A673 (cell line): ENCODE measurements at regions of chr12 and their contacts with region 1.

Region 1: GRCh38 chr12:32615441-32615840 is 63.7 kb upstream of the DNM1L start:
- DNase-seq: no peak
- H3K4me3 ChIP-seq: no peak overlapping the region
- H3K27ac ChIP-seq: no peak overlapping the region
- H3K4me1 ChIP-seq: peaks cover 9% of the 10 kb centered on the region
- H3K27me3 ChIP-seq: no peaks in the 10 kb centered on the region
- CTCF ChIP-seq: no peak

Region 2: DNA sequence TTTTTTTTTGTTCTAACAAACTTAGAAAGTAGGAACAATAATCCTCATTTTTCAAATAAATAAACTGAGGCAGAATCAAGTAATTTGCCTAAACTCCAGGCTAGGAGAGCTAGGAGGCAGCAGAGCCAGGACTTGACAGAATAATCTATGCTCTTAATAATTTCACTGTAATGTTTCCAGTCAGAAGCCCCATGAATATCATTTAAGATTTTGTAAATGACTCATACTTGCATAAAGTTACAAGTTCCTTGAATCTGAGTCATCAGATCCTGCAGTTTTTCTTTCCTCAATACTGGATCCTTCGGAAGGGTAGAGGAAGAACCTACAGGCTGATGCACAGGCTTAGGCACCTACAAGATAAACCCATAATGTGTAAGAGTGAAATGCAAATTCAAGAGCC is 1889.7 kb before region 1 on chr12:
- CTCF ChIA-PET with region 1: no interaction called
- POLR2A ChIA-PET with region 1: no interaction called
- intact Hi-C with region 1: no loop called
- DNase-seq: peak; percentile 69
- H3K4me3 ChIP-seq: no peak overlapping the region
- H3K27ac ChIP-seq: no peak overlapping the region
- H3K4me1 ChIP-seq: peaks cover 7% of the 10 kb centered on the region
- H3K27me3 ChIP-seq: no peaks in the 10 kb centered on the region
- CTCF ChIP-seq: no peak

Region 3: GRCh38 chr12:32467959-32468863 is 147.2 kb before region 1 on chr12:
- CTCF ChIA-PET with region 1: no interaction called
- POLR2A ChIA-PET with region 1: no interaction called
- intact Hi-C with region 1: no loop called
- DNase-seq: no peak
- H3K4me3 ChIP-seq: no peak overlapping the region
- H3K27ac ChIP-seq: no peak overlapping the region
- H3K4me1 ChIP-seq: no peaks in the 10 kb centered on the region
- H3K27me3 ChIP-seq: no peaks in the 10 kb centered on the region
- CTCF ChIP-seq: no peak

Region 4: GRCh38 chr12:32568241-32568640 is 47.2 kb before region 1 on chr12:
- CTCF ChIA-PET with region 1: no interaction called
- POLR2A ChIA-PET with region 1: no interaction called
- intact Hi-C with region 1: loop called (anchors 5 kb)
- DNase-seq: peak; percentile 60
- H3K4me3 ChIP-seq: no peak overlapping the region
- H3K27ac ChIP-seq: no peak overlapping the region
- H3K4me1 ChIP-seq: peaks cover 16% of the 10 kb centered on the region
- H3K27me3 ChIP-seq: no peaks in the 10 kb centered on the region
- CTCF ChIP-seq: no peak

Region 5: DNA sequence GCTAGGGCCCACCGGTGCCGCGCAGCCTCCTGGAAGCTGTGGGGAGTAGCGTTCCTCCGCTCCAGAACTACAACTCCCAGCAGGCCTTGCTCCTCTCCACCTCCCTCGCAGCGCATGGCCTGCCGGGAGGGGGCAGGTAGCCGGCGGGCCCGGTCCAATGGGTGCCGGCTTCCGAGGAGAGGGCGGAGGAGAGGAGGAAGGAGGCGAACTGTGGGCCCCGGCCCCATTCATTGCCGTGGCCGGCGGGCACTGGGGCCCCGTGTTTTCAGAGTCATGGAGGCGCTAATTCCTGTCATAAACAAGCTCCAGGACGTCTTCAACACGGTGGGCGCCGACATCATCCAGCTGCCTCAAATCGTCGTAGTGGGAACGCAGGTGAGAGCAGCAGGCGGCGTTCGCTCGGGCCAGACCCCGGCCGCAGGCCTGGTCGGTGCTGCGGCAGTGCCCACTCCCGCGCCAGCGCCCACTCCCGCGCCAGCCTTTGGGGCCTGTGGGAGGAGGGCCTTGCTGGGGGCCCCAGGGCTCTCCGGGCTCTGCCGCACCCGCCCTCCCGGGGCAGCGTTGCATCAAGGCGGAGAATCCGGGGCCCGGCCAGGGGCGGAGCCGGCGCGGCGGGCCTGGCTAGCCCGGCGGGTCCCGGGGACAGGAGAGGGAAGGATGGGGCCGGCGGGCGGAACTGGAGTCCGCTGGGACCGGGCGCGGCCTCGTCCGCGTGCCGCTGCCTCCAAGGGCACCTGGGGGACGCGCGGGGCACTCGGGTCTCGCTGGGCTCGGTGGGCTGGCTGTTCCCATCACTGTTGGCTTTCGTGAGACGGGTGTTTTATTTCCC is 63.9 kb after region 1 on chr12 and contains the start of gene DNM1L:
- CTCF ChIA-PET with region 1: no interaction called
- POLR2A ChIA-PET with region 1: no interaction called
- intact Hi-C with region 1: no loop called
- DNase-seq: peak; percentile 98
- H3K4me3 ChIP-seq: peak within 1 kb of the TSS; percentile 86
- H3K27ac ChIP-seq: peak within 1 kb of the TSS; percentile 90
- H3K4me1 ChIP-seq: peaks cover 10% of the 10 kb centered on the region
- H3K27me3 ChIP-seq: no peaks in the 10 kb centered on the region
- CTCF ChIP-seq: no peak
- total RNA-seq, gene DNM1L: 102 and 121 TPM in 2 replicates

Region 6: GRCh38 chr12:32918890-32919801 is 303.7 kb after region 1 on chr12:
- CTCF ChIA-PET with region 1: no interaction called
- POLR2A ChIA-PET with region 1: no interaction called
- intact Hi-C with region 1: no loop called
- DNase-seq: peak; percentile 54
- H3K4me3 ChIP-seq: no peak overlapping the region
- H3K27ac ChIP-seq: no peak overlapping the region
- H3K4me1 ChIP-seq: no peaks in the 10 kb centered on the region
- H3K27me3 ChIP-seq: no peaks in the 10 kb centered on the region
- CTCF ChIP-seq: peak; percentile 66